Sigmoid colon (tissue), 7 donors: ENCODE measurements at regions of chr14 and their contacts with region 1.

Region 1: GRCh38 chr14:90608929-90609341 is 207.3 kb downstream of the TTC7B start:
- DNase-seq: peak; percentile 58
- H3K4me3 ChIP-seq: no peak overlapping the region
- H3K27ac ChIP-seq: peak overlapping the region; percentile 25 to 81 (median 78)
- H3K4me1 ChIP-seq: peaks cover 0 to 35% (median 21%) of the 10 kb centered on the region in 4 donors
- H3K27me3 ChIP-seq: no peaks in the 10 kb centered on the region
- CTCF ChIP-seq: no peak
- EP300 ChIP-seq: no peak
- POLR2A ChIP-seq: no peak

Region 2: DNA sequence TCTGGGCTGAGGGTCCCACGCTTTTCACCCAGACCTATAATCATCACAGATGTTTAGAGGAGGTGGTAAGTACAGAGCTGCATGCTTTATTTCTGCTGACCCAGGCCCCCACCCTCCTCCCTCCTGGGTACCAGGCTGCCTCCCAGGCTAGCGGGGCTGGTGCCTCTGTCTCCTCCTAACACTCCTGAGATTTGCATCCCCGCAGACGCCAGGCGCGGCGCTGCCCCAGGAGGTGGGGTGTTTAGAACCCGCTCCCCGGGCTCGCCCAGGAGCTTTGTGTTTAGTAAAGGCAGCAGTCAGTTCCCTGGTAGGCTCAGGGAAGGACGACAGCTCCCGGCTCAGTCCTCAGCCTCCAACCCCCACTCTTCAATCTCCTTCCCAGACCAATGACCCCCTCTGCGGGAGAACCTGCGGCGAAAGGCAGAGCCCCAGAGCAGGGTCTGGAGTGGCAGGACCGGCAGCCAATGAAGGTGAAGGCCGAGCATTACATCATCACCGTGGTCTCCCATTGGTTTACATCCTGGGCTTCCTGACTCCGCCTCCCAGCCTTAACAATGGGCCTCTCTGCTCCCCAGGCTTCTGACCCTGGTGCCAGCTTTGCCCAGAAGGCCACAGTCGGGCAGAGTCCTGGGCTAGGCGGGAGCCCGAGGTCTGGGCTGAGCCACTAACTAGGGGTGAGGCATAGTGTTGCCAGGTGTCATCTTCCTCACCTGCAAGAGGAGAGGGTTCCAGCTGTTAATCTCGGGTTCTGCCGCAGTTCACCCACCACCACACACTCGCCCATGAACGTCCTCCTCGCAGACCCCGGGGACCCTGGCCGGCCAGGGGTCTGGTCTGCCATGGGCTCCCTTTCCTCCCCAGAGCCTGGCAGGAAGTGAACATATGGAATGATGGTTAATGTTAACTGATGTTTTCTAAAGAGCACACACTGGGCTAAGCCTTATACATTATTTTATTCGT is 154.6 kb before region 1 on chr14:
- intact Hi-C with region 1: no loop called
- DNase-seq: peak; percentile 91
- H3K4me3 ChIP-seq: peak overlapping the region in 3 of 4 donors; percentile 22 to 32 (median 25)
- H3K27ac ChIP-seq: peak overlapping the region; percentile 22 to 67 (median 60)
- H3K4me1 ChIP-seq: peaks cover 0 to 36% (median 27%) of the 10 kb centered on the region in 4 donors
- H3K27me3 ChIP-seq: no peaks in the 10 kb centered on the region
- CTCF ChIP-seq: no peak
- EP300 ChIP-seq: no peak
- POLR2A ChIP-seq: no peak

Region 3: DNA sequence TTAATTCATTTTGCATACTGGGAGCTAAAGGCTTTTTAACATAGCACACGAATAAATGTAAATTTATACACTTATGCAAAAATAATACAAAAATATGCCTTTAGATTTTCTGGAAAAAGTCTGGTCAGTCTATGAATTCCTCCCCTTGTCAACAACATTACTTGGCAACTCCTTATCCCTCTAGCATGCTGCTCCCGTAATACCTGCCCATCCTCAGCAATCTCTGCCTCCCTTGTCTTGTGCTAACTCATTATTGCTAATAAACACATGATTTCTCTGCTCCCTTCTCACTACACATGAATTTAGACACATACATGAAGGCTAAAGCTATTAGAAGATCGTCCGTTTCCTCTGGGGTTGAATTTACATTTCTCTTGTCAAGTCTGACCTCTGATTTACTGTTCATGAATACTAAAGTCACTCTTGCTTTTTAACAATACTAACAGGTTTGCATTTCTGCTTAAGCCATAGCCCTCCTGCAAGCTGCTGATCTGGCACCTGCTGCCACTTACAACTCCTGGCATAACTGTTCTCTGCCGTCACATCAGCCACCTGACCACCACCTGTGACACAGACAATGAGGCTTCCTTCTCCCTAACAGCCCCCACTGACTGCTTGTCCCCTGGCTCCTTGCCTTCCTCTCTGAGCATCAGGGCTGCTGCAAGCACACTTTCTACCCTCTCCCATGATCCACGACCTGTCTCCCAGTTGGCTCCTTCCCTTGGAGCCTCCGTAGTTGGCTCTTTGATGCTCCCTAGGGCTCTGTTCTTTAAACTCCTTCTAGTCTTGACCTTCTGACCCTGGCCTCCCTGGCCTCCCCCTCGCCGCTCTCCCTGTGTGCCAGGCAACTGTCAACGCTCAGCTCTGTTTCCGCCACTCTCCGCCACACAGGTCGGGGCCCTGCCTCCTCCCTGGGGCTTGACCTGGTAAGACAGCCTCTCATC is 34.5 kb before region 1 on chr14:
- intact Hi-C with region 1: loop called (anchors 5 kb)
- DNase-seq: no peak
- H3K4me3 ChIP-seq: no peak overlapping the region
- H3K27ac ChIP-seq: peak overlapping the region; percentile 33 to 59 (median 42)
- H3K4me1 ChIP-seq: peaks cover 0 to 26% (median 18%) of the 10 kb centered on the region in 4 donors
- H3K27me3 ChIP-seq: no peaks in the 10 kb centered on the region
- CTCF ChIP-seq: no peak
- EP300 ChIP-seq: peak in 1 of 4 donors; percentile 68
- POLR2A ChIP-seq: no peak

Region 4: DNA sequence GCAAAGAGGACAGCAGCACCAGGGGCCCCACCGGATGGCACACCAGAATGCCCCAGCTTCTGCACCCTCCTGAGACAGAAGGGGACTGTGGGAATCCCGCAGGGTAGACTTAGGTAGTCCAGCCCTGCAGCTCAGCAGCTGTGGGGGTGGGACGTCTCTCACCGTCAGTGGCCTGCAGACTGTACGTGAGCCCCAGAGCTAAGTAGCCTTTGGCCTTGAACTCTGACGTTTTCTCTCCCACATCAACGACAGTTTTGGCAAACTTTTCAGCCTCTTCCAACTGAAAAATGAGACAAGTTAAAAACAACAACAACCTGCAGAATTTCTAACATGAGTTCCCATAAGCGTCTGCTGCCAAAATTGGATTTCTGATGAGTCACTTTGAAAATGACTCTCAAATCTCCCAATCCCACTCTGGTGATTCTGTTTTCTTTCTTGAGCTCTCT is 45.9 kb after region 1 on chr14:
- intact Hi-C with region 1: no loop called
- DNase-seq: no peak
- H3K4me3 ChIP-seq: no peak overlapping the region
- H3K27ac ChIP-seq: peak overlapping the region; percentile 17 to 65 (median 22)
- H3K4me1 ChIP-seq: peaks cover 0 to 45% (median 36%) of the 10 kb centered on the region in 4 donors
- H3K27me3 ChIP-seq: no peaks in the 10 kb centered on the region
- CTCF ChIP-seq: no peak
- EP300 ChIP-seq: no peak
- POLR2A ChIP-seq: no peak

Region 5: DNA sequence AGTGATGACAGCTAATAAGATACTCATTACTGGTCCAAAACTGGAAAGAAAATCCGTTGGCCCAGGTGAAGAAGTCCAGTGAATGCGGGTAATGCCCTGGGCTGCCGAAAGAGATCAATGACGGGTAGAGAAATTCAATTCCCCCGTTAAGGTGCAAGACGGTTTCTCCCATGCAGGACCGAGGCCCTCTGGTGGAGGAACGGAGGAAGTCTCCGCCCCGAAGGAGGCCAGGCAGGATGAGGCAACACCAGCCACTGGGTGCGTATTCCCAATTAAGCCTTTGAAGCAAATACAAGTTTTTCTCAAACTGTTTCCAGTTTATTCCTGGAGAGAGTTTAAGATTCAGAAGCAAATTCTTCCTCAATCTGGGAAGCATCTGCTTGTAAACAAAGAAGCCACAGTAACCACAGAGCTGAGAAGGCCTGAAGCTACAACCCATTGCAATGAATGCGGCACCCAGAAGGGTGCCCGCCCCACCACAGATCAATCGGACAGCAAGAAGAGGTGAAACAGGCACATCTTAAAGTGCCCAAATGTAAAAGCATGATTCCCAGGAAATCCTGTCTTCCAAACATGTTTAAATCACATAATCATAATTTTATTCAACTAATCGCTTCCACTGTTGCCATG is 88.8 kb after region 1 on chr14:
- intact Hi-C with region 1: no loop called
- DNase-seq: peak; percentile 95
- H3K4me3 ChIP-seq: no peak overlapping the region
- H3K27ac ChIP-seq: peak overlapping the region; percentile 76 to 86 (median 82)
- H3K4me1 ChIP-seq: peaks cover 0 to 39% (median 34%) of the 10 kb centered on the region in 4 donors
- H3K27me3 ChIP-seq: no peaks in the 10 kb centered on the region
- CTCF ChIP-seq: peak; percentile 86 to 97 (median 96)
- EP300 ChIP-seq: no peak
- POLR2A ChIP-seq: no peak